ENCODE measurements at regions of chr6 and their contacts with region 1.

Region 1: GRCh38 chr6:78995946-78996345 is 82.1 kb downstream of the PHIP start:
- DNase-seq: peak; percentile 61
- ATAC-seq: peak; percentile 46; the same call in 1 of the 2 replicates
- H3K4me3 ChIP-seq: no peak overlapping the region
- H3K27ac ChIP-seq: no peak overlapping the region
- H3K4me1 ChIP-seq: no peaks in the 10 kb centered on the region
- H3K27me3 ChIP-seq: no peaks in the 10 kb centered on the region
- CTCF ChIP-seq: no peak
- POLR2A ChIP-seq: no peak
- RAD21 ChIP-seq: no peak

Region 2: DNA sequence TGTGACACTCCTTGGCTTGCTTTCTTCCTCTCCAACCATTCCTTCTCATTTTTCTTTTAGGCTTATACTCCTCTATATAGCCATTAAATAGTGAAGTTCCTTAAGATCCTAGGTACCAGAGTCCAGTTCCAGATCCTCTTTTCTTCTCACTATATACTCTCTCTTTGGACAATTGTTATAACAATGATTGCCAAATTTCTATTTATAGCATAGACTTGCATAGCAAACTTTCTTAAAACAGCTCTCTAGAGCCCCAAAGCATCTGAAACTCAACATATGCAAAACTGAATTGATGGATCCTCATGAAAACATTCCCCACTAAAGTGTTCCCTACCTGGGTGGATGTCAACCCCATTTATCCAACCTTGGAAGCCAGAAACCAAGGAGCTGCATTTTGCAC is 68.7 kb after region 1 on chr6:
- CTCF ChIA-PET with region 1: no interaction called
- POLR2A ChIA-PET with region 1: no interaction called
- dilution Hi-C with region 1: no loop called
- in situ Hi-C with region 1: no loop called
- intact Hi-C with region 1: loop called (anchors 5 kb)
- DNase-seq: no peak
- ATAC-seq: no peak
- H3K4me3 ChIP-seq: no peak overlapping the region
- H3K27ac ChIP-seq: no peak overlapping the region
- H3K4me1 ChIP-seq: peaks cover 7% of the 10 kb centered on the region
- H3K27me3 ChIP-seq: no peaks in the 10 kb centered on the region
- CTCF ChIP-seq: no peak
- POLR2A ChIP-seq: no peak
- RAD21 ChIP-seq: no peak

Region 3: GRCh38 chr6:79466207-79466834 is 470.4 kb after region 1 on chr6:
- CTCF ChIA-PET with region 1: no interaction called
- POLR2A ChIA-PET with region 1: no interaction called
- dilution Hi-C with region 1: no loop called
- in situ Hi-C with region 1: no loop called
- intact Hi-C with region 1: loop called (anchors 10 kb)
- DNase-seq: peak; percentile 39
- ATAC-seq: peak; percentile 52
- H3K4me3 ChIP-seq: no peak overlapping the region
- H3K27ac ChIP-seq: no peak overlapping the region
- H3K4me1 ChIP-seq: peaks cover 4% of the 10 kb centered on the region
- H3K27me3 ChIP-seq: peaks cover 3% of the 10 kb centered on the region; the same call in 1 of the 2 replicates
- CTCF ChIP-seq: peak; percentile 58
- POLR2A ChIP-seq: no peak
- RAD21 ChIP-seq: peak; percentile 61